ENCODE measurements at regions of chr18 and their contacts with region 1.

Region 1: DNA sequence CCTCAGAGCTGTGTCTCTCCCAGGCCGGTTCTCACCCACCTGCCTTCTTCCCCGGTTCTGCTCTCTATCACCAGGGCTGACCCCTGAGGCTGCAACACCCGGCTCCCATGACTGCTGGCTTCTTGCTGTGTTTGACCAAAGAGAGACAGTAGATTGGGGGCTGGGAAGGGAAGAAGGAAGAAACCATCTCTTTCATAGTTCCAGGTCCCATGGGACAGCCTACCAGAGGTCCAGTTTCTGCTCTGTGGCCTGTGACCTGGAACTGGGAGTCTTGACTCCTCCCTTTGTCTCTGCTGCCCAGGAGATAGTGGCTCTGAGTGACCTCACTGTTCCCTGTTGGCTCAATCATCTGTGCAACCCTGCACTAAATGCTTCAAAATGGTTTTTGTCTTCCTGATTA is 38.1 kb downstream of the ALPK2 start:
- DNase-seq: no peak
- ATAC-seq: peak in 5 of 8 donors; percentile 35 to 60 (median 45)
- H3K4me3 ChIP-seq: no peak overlapping the region
- H3K27ac ChIP-seq: peak overlapping the region; percentile 20 to 84 (median 78)
- H3K4me1 ChIP-seq: peaks cover 12 to 61% (median 47%) of the 10 kb centered on the region in 9 donors
- H3K27me3 ChIP-seq: no peaks in the 10 kb centered on the region
- CTCF ChIP-seq: no peak

Region 2: GRCh38 chr18:58541789-58542425 is 48.9 kb before region 1 on chr18:
- intact Hi-C with region 1: loop called in 2 of 10 experiments (anchors 5 kb)
- DNase-seq: no peak
- ATAC-seq: peak in 3 of 8 donors; percentile 24 to 50 (median 41)
- H3K4me3 ChIP-seq: no peak overlapping the region
- H3K27ac ChIP-seq: peak overlapping the region in 7 of 10 donors; percentile 25 to 64 (median 47)
- H3K4me1 ChIP-seq: peaks cover 0 to 55% (median 31%) of the 10 kb centered on the region in 9 donors
- H3K27me3 ChIP-seq: no peaks in the 10 kb centered on the region
- CTCF ChIP-seq: no peak

Region 3: GRCh38 chr18:58552057-58552461 is 38.8 kb before region 1 on chr18:
- intact Hi-C with region 1: loop called in 3 of 10 experiments (anchors 2 to 5 kb)
- DNase-seq: no peak
- ATAC-seq: no peak
- H3K4me3 ChIP-seq: no peak overlapping the region
- H3K27ac ChIP-seq: peak overlapping the region in 7 of 10 donors; percentile 11 to 89 (median 44)
- H3K4me1 ChIP-seq: peaks cover 0 to 37% (median 7%) of the 10 kb centered on the region in 9 donors
- H3K27me3 ChIP-seq: no peaks in the 10 kb centered on the region
- CTCF ChIP-seq: no peak